Activated CD4-positive, alpha-beta T cell treated with anti-CD3 and anti-CD28 coated beads, Interleukin-2, amount 10 ng/mL, durations not matched to agents 24 days and 14 days (primary cell): ENCODE measurements at regions of chr1 and their contacts with region 1.

Region 1: DNA sequence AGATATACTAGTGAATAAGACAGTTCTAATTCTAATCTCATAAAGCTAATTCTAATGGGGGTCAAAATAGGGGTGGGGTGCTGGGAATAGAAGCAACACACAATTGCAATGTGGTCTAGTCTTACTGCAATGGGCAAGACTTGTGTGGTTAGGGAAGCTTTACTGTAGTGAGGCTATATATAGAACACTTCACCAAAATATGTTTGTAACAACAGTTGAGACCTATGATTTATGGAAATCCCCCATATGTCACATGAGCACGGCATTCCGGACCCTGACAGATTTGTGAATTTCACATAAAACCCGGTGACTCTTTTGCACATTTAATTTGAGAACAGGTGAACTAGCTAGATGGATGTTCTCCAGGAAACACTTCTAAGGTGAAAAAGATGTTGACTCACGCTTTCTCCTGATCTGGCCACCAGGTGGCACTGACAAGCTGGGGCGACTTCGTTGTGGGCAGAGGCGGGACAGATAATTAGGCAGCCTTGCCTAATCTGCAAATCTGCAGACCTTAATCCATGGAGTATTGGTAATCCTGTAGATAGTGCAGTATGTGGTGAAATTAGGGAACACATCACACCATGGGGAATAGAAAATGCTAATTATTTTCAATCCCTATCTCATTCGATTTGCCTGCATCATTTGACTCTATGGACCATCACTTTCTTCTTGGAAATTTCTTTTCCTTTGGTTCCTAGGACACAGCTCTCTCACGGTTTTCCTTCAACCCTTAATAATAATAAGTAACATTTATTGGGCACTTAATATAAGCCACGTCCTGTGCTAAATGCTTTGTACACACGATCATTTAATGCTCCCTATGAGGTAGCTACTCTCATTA is 37.7 kb downstream of the KIAA0040 start:
- DNase-seq: peak; percentile 93
- H3K4me3 Mint-ChIP-seq: no peak overlapping the region
- H3K27ac Mint-ChIP-seq: no peak overlapping the region
- H3K4me1 Mint-ChIP-seq: peaks cover 30% of the 10 kb centered on the region
- H3K27me3 Mint-ChIP-seq: peaks cover 34% of the 10 kb centered on the region

Region 2: GRCh38 chr1:174726880-174727585 is 427.8 kb before region 1 on chr1:
- intact Hi-C with region 1: no loop called
- DNase-seq: no peak
- H3K4me3 Mint-ChIP-seq: no peak overlapping the region
- H3K27ac Mint-ChIP-seq: no peak overlapping the region
- H3K4me1 Mint-ChIP-seq: no peaks in the 10 kb centered on the region
- H3K27me3 Mint-ChIP-seq: no peaks in the 10 kb centered on the region

Region 3: DNA sequence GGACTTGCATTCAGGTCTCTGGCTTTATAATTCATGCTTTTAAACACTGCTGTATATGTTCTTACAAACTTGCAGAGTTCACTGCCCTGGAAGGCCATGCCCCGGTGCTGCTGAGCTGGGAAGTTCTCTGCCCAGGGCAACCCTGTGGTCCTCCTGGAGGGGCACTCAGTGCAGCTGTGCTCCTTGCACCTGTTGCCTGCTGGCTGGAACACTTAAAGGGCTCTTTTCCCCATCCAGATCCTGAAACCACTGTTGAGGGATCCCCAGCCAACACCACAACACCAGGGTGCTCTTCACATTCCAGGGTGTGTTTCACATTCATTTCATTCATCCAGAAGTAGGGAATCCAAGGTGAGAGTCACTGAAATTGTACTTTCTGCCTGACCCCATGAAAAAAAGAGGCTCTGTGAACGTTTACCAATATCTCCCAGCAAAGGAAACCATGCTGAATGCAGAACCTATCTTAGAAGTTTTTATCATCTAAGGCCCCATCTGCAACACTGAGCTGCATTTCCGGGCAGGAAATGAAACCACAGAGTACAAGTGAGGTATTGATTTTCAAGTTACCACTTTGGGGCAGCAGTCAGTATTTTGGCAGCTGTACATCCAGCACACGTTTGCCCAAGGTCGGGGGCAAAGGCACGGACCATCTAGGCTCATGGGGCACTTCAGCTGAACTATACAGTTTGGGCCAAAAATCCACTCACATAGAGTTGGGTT is 54.1 kb after region 1 on chr1:
- intact Hi-C with region 1: loop called (anchors 1 kb)
- DNase-seq: peak; percentile 90
- H3K4me3 Mint-ChIP-seq: peak overlapping the region; percentile 81
- H3K27ac Mint-ChIP-seq: peak overlapping the region; percentile 94
- H3K4me1 Mint-ChIP-seq: peaks cover 58% of the 10 kb centered on the region
- H3K27me3 Mint-ChIP-seq: no peaks in the 10 kb centered on the region

Region 4: GRCh38 chr1:175319418-175320230 is 164.8 kb after region 1 on chr1:
- intact Hi-C with region 1: loop called (anchors 1 kb)
- DNase-seq: peak; percentile 90
- H3K4me3 Mint-ChIP-seq: no peak overlapping the region
- H3K27ac Mint-ChIP-seq: no peak overlapping the region
- H3K4me1 Mint-ChIP-seq: peaks cover 10% of the 10 kb centered on the region
- H3K27me3 Mint-ChIP-seq: peaks cover 14% of the 10 kb centered on the region

Region 5: DNA sequence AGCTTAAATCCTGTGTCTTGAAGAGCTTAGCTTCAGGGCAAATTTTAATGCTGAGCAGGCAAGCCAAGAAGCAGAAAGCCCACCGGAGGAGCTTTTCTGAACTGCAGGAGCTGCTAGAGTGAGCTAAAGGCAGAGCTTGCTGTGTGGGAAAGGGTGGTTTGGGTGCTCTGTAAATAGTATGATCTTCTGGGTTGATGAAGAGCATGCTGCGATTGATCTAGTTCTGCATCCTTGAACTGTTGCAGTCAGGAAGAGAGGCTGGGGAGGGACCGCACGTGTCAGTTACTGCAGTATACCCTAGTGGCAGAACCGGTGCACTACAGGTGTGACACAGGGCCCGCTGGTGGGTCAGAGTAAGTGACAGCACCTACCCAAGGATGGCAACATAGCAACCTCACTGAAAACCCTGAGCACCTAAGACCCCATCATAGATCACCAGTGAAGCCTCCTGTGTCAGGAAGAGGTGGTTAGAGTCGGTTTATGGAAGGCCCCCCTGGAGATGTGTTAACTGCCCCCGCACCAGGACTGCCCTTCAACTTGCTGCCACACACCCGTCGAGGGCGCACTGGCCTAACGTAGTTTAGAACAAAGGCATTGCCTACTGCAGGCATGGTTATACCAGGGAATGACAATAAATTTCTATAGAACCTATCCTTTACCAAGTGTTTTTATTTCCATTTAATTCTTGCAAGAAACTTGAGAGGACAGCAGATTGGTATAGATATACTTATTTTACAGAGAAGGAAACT is 183.7 kb after region 1 on chr1:
- intact Hi-C with region 1: loop called (anchors 5 kb)
- DNase-seq: peak; percentile 86
- H3K4me3 Mint-ChIP-seq: no peak overlapping the region
- H3K27ac Mint-ChIP-seq: no peak overlapping the region
- H3K4me1 Mint-ChIP-seq: peaks cover 2% of the 10 kb centered on the region
- H3K27me3 Mint-ChIP-seq: peaks cover 33% of the 10 kb centered on the region

Region 6: DNA sequence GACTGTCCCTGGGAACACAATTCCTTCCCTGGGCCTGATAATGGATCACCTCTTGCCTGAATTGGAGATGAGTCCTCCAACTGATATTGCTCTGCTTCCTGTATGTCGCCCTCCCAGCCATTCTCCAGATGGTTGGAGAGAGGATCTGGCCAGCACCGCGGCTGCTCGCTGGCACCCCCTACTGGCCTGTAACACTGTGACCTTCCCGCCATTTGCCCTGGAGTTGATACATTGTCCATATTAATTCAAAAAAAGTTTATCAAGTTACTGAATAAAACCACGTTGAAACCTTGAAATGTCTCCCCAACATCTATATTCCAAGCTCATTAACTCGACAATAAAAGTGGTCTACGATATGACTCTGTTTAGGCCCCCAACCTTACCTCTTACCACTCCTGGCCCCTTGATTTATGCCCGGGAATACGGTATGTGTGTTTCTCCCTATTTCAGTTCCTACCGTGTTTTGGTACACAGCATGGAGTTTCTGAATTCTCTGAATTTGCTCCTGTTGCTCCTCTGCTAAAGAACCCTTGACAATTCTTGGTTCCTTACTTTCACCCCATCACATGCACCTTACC is 279.5 kb after region 1 on chr1:
- intact Hi-C with region 1: loop called (anchors 1 kb)
- DNase-seq: peak; percentile 60
- H3K4me3 Mint-ChIP-seq: no peak overlapping the region
- H3K27ac Mint-ChIP-seq: no peak overlapping the region
- H3K4me1 Mint-ChIP-seq: no peaks in the 10 kb centered on the region
- H3K27me3 Mint-ChIP-seq: peaks cover 24% of the 10 kb centered on the region

Region 7: DNA sequence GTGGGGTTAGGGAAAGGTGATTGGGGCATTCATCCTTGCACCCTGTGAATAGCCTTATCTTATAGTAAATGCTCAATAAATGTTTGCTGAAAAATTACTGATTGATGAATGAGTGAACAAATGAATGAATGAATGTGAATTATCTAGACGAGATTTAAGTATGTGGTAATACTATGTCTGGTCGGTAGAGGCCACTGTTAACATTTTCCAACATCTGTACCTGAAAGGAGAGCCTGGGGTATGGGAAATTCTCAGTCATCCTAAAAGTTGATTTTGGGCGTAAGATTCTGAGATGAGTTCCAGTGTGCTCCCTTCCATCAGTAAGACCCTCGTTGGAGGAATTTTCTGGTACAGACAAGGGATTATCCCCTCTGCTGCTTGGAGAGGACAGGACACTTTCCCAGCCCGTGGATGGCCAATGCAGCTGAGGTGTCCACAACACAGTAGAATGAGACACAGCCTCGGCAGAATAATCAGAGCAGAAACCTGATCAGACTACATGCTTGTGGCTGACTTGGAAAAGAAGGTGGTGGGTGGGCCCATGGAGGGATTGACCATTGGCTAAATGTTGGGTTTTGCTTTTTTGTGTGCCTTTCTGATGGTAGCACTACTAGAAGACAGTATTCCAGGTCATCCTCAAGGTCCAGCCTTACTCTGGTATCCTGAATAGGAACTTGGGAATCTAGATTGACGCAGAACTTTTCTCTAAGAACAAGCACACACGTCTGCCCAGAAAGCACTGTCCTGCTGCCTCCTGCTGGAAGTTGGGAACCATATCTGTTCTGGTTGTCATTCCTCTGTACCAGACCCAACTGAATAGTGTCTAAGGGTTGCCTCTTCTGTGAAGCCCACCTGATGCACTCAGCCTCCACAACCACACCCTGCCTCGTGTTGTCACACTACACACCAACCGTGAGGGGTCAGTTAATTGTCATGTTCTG is 326.5 kb after region 1 on chr1:
- intact Hi-C with region 1: loop called (anchors 5 kb)
- DNase-seq: peak; percentile 60
- H3K4me3 Mint-ChIP-seq: no peak overlapping the region
- H3K27ac Mint-ChIP-seq: no peak overlapping the region
- H3K4me1 Mint-ChIP-seq: no peaks in the 10 kb centered on the region
- H3K27me3 Mint-ChIP-seq: peaks cover 15% of the 10 kb centered on the region

Region 8: DNA sequence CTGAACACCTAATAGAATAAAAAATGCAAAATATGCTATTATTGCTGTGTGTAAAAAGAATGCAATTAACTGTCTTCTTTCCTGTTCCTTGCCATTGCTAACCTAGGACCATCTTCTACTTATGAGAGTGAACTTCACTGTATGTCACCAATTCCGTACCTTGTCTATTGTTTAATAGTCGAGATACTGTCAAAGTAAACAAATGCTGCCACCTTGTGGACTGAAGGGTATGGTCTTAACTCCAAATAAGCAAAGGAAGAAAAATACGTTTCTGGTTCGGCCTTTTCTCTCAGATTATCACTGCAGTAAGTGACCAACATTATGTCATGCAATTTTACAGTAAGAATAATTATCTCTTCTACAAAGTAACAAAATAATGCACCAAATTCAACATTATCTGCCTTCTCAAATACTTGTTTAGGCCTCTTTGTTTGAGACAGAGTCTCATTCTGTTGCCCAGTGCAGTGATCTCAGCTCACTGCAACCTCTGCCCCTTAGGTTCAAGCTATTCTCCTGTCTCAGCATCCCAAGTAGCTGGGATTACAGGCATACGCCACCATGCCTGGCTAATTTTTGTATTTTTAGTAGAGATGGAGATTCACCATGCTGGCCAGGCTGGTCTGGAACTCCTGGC is 918.8 kb after region 1 on chr1:
- intact Hi-C with region 1: loop called (anchors 10 kb)
- DNase-seq: peak; percentile 73
- H3K4me3 Mint-ChIP-seq: no peak overlapping the region
- H3K27ac Mint-ChIP-seq: no peak overlapping the region
- H3K4me1 Mint-ChIP-seq: peaks cover 2% of the 10 kb centered on the region
- H3K27me3 Mint-ChIP-seq: no peaks in the 10 kb centered on the region